Activated T-helper 2 cell treated with anti-CD3 and anti-CD28 coated beads, Interferon-gamma antibody, Interleukin-2, Interleukin-4, amounts not matched to agents 10 μg/mL and 5 μg/mL and 100 μg/mL, durations not matched to agents 14 hours and 24 hours and 36 hours (primary cell): ENCODE measurements at regions of chr3 and their contacts with region 1.

Region 1: DNA sequence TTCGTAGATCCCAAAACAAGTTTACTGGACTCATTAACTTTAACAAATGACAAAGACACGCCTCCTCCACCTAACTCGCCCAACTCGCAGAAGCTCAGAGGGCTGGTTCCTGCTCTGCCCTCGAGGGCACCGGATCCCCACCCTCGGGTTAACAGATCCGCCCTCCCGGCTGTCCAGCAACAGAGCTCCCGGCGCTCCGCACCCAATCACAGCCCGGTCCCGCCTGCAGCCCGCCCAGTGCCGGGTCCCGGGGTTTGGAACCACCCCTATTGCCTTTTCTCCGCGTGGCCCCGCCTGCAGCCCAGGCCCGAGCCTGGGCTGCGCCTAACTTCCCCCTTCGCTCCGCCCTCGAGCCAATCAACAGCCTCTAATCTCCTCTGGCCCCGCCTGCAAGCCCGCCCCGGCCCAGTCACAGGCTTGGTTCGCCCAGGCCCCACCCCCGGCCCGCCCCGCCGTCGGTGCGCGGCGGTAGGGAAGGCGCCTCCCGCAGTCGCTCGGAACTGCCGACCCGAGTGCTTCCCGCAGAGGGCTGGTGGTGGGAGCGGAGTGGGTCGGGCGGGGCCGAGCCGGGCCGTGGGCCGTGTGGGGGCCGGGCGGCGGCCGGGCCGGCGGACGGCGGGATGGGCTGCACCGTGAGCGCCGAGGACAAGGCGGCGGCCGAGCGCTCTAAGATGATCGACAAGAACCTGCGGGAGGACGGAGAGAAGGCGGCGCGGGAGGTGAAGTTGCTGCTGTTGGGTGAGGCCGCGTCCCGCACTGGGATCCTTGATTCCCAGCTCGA is at the start of gene GNAI2:
- DNase-seq: peak; percentile 99
- H3K4me3 Mint-ChIP-seq: peak within 1 kb of the TSS; percentile 95
- H3K27ac Mint-ChIP-seq: peak within 1 kb of the TSS; percentile 89
- H3K4me1 Mint-ChIP-seq: peaks cover 24% of the 10 kb centered on the region
- H3K27me3 Mint-ChIP-seq: no peaks in the 10 kb centered on the region
- total RNA-seq, gene GNAI2: 267 and 269 TPM in 2 replicates

Region 2: DNA sequence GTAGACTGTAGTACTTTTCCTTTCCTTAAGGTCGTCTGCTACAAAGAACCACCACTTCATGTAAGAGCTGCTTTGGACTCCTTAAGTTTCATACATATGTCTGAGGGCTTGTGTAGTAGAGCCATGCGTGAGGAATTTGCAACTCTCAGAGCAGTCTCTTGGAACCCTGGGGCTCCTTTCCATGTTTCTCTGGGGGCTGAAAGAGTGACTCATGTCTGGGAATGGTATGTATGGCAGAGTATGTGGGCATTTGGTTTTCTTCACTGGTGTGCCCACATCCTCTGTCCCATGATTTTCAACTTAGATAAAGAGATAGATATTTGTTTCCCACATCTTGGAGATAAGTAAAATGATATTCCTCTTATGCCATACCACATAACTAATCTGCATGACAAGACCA is 167.8 kb before region 1 on chr3:
- intact Hi-C with region 1: no loop called
- DNase-seq: no peak
- H3K4me3 Mint-ChIP-seq: no peak overlapping the region
- H3K27ac Mint-ChIP-seq: no peak overlapping the region
- H3K4me1 Mint-ChIP-seq: no peaks in the 10 kb centered on the region
- H3K27me3 Mint-ChIP-seq: no peaks in the 10 kb centered on the region

Region 3: GRCh38 chr3:50245831-50246516 is 10.1 kb after region 1 on chr3:
- intact Hi-C with region 1: loop called (anchors 1 kb)
- DNase-seq: peak; percentile 86
- H3K4me3 Mint-ChIP-seq: peak overlapping the region; percentile 82
- H3K27ac Mint-ChIP-seq: peak overlapping the region; percentile 92
- H3K4me1 Mint-ChIP-seq: peaks cover 62% of the 10 kb centered on the region
- H3K27me3 Mint-ChIP-seq: no peaks in the 10 kb centered on the region

Region 4: DNA sequence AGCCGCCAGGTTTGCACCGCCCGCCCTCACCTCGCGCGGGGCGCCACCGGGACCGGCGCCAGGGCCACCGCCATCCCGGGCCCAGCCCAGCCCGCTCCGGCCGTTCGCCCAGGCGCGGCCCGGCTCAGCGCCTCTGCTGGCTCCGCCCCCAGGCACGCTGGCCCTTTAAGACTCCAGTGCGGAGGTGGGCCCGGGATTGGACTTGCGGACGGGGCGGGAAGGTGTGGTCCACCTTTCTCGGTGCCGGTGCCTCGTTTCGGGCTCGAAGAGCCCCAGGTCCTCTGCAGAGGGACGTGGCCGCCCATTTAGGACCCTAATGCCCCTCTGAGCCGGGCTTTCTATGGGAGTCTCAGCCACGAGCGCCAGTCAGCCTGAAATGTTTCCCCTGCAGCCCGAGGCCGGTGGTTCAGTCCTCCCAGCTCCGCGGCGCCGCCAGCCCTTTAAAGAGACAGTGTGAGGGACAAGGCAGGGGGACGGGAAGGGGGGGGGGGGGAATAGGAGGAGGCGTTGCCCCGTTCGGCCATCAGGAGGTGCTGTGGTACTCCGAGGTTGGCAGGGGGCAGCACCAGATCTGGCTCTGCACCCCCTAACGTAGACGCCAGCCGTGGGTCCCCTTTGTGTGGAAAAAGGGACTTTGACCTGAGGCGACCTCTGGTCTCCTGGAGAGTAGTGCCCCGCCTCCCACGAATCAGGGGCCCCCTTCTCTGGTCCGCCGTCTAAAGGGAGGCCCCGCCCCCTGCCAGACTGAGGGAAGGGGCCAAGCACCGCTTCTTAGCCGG is 85.6 kb after region 1 on chr3:
- intact Hi-C with region 1: loop called (anchors 5 kb)
- DNase-seq: peak; percentile 84
- H3K4me3 Mint-ChIP-seq: peak overlapping the region; percentile 74
- H3K27ac Mint-ChIP-seq: peak overlapping the region; percentile 92
- H3K4me1 Mint-ChIP-seq: peaks cover 11% of the 10 kb centered on the region
- H3K27me3 Mint-ChIP-seq: no peaks in the 10 kb centered on the region

Region 5: GRCh38 chr3:50600841-50601591 is 365.1 kb after region 1 on chr3:
- intact Hi-C with region 1: loop called (anchors 5 kb)
- DNase-seq: peak; percentile 80
- H3K4me3 Mint-ChIP-seq: peak overlapping the region; percentile 74
- H3K27ac Mint-ChIP-seq: peak overlapping the region; percentile 100
- H3K4me1 Mint-ChIP-seq: peaks cover 81% of the 10 kb centered on the region
- H3K27me3 Mint-ChIP-seq: no peaks in the 10 kb centered on the region

Region 6: DNA sequence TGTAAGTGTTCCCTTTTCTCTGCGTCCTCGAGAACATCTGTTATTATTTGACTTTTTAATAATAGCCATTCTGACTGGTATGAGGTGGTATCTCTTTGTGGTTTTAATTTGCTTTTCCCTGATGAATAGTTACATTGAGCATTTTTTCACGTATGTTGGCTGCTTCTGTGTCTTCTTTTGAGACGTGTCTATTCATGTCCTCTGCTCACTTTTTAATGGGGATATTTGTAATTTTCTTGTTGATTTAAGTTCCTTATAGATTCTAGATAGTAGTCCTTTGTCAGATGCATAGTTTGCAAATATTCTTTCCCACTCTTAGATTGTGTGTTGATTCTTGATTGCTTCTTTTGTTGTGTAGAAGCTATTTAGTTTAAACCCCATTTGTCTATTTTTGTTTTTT is 618.0 kb after region 1 on chr3:
- intact Hi-C with region 1: no loop called
- DNase-seq: no peak
- H3K4me3 Mint-ChIP-seq: no peak overlapping the region
- H3K27ac Mint-ChIP-seq: no peak overlapping the region
- H3K4me1 Mint-ChIP-seq: no peaks in the 10 kb centered on the region
- H3K27me3 Mint-ChIP-seq: no peaks in the 10 kb centered on the region